Activated CD4-positive, alpha-beta T cell treated with anti-CD3 and anti-CD28 coated beads, Interleukin-2, amount 10 ng/mL, durations not matched to agents 7 days and 5 days (primary cell): ENCODE measurements at regions of chr4 and their contacts with region 1.

Region 1: GRCh38 chr4:663438-664428 is 10.3 kb downstream of the ATP5ME start:
- DNase-seq: peak; percentile 81
- H3K4me3 Mint-ChIP-seq: peak overlapping the region; percentile 80
- H3K27ac Mint-ChIP-seq: peak overlapping the region; percentile 92
- H3K4me1 Mint-ChIP-seq: peaks cover 19% of the 10 kb centered on the region
- H3K27me3 Mint-ChIP-seq: no peaks in the 10 kb centered on the region

Region 2: DNA sequence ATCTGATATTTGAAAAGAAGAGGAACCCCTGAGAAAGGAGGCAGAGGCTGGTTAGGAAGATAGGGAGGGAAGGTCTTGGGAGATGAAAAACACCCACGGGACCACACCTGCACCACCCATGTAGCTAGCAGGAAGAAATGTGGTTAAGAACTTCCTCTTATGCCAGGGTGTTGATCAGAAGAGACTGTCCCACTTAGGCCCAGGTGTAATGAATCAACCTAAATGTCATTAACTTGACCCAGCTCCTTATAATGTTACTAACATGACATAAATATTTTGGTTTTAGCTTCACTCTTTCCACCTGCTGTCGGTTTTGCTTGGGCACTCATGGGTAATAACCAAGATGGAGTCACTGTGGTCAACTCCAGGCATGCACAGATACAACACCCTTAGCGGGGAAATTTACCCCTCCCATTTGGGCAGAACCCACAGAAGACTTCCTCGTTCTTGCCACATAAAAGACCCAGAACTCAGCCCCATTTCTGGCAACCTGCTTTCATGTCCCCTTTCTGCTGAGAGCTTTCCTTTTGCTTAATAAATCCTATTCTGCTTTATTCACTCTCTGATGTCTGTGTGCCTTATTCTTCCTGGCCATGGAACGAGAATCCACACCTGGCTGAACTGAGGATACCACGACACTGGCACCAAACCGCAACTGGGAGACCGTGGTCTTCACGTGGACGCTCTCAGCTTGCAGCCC is 279.3 kb before region 1 on chr4:
- CTCF ChIA-PET with region 1: no interaction called
- POLR2A ChIA-PET with region 1: no interaction called
- DNase-seq: peak; percentile 37
- H3K4me3 Mint-ChIP-seq: no peak overlapping the region
- H3K27ac Mint-ChIP-seq: peak overlapping the region; percentile 77
- H3K4me1 Mint-ChIP-seq: peaks cover 17% of the 10 kb centered on the region
- H3K27me3 Mint-ChIP-seq: no peaks in the 10 kb centered on the region

Region 3: GRCh38 chr4:473570-474457 is 189.9 kb before region 1 on chr4:
- CTCF ChIA-PET with region 1: no interaction called
- POLR2A ChIA-PET with region 1: no interaction called
- DNase-seq: peak; percentile 96
- H3K4me3 Mint-ChIP-seq: peak overlapping the region; percentile 97
- H3K27ac Mint-ChIP-seq: peak overlapping the region; percentile 98
- H3K4me1 Mint-ChIP-seq: peaks cover 40% of the 10 kb centered on the region
- H3K27me3 Mint-ChIP-seq: no peaks in the 10 kb centered on the region

Region 4: GRCh38 chr4:566508-567295 is 97.0 kb before region 1 on chr4:
- CTCF ChIA-PET with region 1: no interaction called
- POLR2A ChIA-PET with region 1: no interaction called
- DNase-seq: no peak
- H3K4me3 Mint-ChIP-seq: no peak overlapping the region
- H3K27ac Mint-ChIP-seq: no peak overlapping the region
- H3K4me1 Mint-ChIP-seq: no peaks in the 10 kb centered on the region
- H3K27me3 Mint-ChIP-seq: no peaks in the 10 kb centered on the region

Region 5: DNA sequence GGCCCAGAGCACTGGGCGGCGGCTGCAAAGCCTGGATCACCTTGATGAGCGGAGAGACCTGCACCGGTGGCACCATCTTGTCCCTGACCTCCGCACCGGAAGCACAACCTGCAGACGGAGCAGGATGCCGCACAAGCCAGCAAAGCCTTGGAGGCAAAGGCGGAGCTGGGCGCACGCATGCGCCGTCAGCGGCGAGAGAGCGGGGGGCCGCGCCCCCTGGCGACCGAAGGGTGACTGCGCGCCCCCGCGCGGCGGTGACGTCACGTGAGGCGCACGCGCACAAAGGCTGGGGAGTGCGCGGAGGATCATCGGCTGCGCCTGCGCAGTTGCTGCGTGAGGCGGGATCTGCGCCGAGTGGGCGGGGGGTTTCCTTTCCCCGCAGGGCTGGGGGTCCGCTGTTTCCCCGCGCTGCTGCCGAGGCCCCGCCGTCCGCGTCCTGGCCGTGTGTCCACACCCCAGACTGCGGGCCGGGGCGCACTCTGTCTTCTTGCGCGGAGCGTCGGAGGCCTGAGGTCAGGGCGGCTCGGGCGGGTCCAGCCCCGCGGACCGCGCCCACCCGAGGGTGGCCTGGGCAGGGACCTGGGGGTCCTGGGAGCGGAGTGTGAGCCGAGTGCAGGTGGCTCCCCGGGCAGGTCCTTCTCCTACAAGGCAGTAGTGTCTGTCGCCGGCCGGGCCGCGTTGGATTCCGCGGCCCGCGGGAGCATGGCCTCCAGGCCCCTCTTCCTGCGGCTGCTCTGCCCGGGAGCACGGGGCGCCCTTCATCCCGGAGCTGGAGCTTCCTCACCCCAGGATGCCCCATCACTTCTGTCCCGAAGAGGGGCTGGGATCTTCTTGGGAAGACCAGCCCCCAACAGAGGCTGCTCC is 10.7 kb after region 1 on chr4 and contains the starts of genes ATP5ME and MYL5:
- CTCF ChIA-PET with region 1: interaction called, 22 read pairs
- POLR2A ChIA-PET with region 1: interaction called, 4 read pairs
- DNase-seq: peak; percentile 98
- H3K4me3 Mint-ChIP-seq: peak within 1 kb of the TSS; percentile 86
- H3K27ac Mint-ChIP-seq: peak within 1 kb of the TSS; percentile 89
- H3K4me1 Mint-ChIP-seq: peaks cover 8% of the 10 kb centered on the region
- H3K27me3 Mint-ChIP-seq: no peaks in the 10 kb centered on the region
- total RNA-seq, gene ATP5ME: 162 to 183 TPM
- total RNA-seq, gene MYL5: 17.8 to 19.0 TPM

Region 6: GRCh38 chr4:721261-722168 is 57.8 kb after region 1 on chr4:
- CTCF ChIA-PET with region 1: no interaction called
- POLR2A ChIA-PET with region 1: no interaction called
- DNase-seq: no peak
- H3K4me3 Mint-ChIP-seq: no peak overlapping the region
- H3K27ac Mint-ChIP-seq: peak overlapping the region; percentile 64
- H3K4me1 Mint-ChIP-seq: peaks cover 8% of the 10 kb centered on the region
- H3K27me3 Mint-ChIP-seq: no peaks in the 10 kb centered on the region